Tibial artery (tissue), 4 donors: ENCODE measurements at regions of chr1 and their contacts with region 1.

Region 1: DNA sequence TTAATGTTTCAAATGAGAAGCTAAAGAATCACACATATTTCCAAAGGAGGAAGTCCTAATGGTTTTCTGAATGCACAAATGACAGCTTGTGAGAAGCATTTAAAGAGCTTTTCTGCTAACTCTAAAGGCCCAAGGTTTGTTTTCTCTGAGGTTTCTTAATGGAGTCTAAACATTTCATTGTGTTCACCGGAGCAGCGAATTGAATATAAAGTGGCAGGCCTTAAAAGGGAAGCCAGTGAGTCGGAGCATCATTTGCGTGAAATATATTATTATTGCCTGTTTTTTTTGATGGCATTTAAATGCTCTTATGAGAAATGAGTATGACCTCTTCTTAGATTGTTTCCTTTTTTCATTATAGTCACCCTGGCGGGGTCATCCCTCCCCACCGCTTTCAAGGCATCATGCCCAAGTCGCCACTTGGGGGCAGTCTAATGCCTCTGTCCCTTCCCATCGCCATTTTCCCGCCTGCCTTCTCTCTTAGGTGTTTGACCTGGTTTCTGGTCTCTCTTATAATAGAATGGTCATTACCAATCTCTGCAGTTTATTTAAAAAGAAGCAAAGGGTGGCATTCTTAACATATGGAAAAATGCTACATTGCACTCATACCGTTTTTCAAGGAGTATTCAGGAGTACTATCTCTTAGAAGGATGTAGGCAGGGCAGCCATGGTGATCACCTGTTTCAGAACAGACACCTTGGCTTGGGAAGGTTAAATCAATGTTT is 25.3 kb upstream of the OVAAL start:
- DNase-seq: peak; percentile 52 to 72
- H3K4me3 ChIP-seq: no peak overlapping the region
- H3K27ac ChIP-seq: no peak overlapping the region
- H3K4me1 ChIP-seq: peaks cover 0 to 24% (median 8%) of the 10 kb centered on the region in 4 donors
- H3K27me3 ChIP-seq: no peaks in the 10 kb centered on the region
- CTCF ChIP-seq: peak; percentile 73 to 80

Region 2: DNA sequence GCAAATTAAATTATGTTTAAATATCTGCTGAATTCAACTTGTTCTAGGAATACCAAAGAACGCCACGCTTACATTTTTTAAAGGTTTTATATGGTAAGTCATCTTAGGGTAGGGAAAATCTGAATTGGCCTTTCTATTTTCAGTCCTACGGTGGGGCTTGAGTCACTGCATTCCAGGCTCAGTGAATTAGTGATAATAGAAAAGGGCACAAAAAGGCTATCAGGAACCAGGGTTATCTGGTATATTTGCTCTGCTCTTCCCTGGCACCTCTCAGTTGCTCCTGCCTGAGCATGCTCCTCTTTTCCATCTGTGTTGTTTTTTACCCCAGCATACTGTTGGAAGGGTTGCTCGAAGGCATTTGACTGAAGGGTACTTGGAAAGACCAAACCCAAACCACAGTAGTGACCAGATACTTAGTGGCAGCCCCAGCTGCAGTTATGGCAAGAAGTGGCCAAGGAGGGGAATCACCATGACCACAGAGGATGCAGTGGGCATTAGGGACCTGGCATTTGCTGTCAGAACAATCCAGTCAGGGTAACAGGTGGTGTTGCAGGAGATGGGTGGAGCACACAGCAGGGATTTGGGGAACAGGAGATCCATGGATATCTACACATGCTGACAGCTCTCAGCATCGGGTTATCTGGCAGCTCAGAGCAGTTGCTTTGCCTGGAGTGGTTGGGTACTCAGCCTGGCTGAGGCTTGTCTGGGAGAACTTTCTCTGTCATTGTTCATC is 27.6 kb after region 1 on chr1:
- intact Hi-C with region 1: loop called (anchors 2 kb)
- DNase-seq: no peak
- H3K4me3 ChIP-seq: no peak overlapping the region
- H3K27ac ChIP-seq: peak overlapping the region; percentile 3 to 66
- H3K4me1 ChIP-seq: peaks cover 0 to 38% (median 23%) of the 10 kb centered on the region in 4 donors
- H3K27me3 ChIP-seq: no peaks in the 10 kb centered on the region
- CTCF ChIP-seq: no peak

Region 3: GRCh38 chr1:180863158-180863775 is 329.8 kb after region 1 on chr1:
- intact Hi-C with region 1: loop called (anchors 5 kb)
- DNase-seq: no peak
- H3K4me3 ChIP-seq: no peak overlapping the region
- H3K27ac ChIP-seq: no peak overlapping the region
- H3K4me1 ChIP-seq: peaks cover 0 to 7% (median 0%) of the 10 kb centered on the region in 4 donors
- H3K27me3 ChIP-seq: no peaks in the 10 kb centered on the region
- CTCF ChIP-seq: peak; percentile 66 to 83